B cell (primary cell): ENCODE measurements at regions of chr1 and their contacts with region 1.

Region 1: DNA sequence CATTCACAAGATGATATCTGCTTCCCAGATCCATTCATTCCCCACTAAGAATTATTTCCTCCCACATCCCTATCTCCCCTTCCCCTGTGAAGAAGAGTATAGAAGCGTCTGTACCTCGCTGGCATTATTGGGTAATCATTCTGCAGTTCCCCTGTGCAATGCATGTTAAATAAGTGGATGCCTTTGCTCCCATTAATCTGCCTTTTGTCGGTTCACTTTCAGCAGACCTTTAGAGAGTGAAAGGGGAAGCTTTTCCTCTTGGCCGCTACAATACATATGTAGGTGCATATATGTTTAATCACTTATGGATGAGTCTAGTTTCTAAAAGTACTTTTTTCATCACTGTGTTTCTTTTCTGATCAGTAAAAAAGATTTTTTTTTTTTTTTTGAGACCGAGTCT is 7.0 kb downstream of the CLCN6 start:
- DNase-seq: no peak
- ATAC-seq: no peak
- H3K4me3 ChIP-seq: no peak overlapping the region
- H3K4me3 Mint-ChIP-seq: peak overlapping the region; percentile 23
- H3K27ac ChIP-seq: peak overlapping the region in 1 of 2 donors; percentile 91
- H3K27ac Mint-ChIP-seq: peak overlapping the region; percentile 86
- H3K4me1 ChIP-seq: peaks cover 42 to 54% of the 10 kb centered on the region in 2 donors
- H3K4me1 Mint-ChIP-seq: peaks cover 61% of the 10 kb centered on the region
- H3K27me3 ChIP-seq: no peaks in the 10 kb centered on the region
- H3K27me3 Mint-ChIP-seq: no peaks in the 10 kb centered on the region
- CTCF ChIP-seq: no peak

Region 2: DNA sequence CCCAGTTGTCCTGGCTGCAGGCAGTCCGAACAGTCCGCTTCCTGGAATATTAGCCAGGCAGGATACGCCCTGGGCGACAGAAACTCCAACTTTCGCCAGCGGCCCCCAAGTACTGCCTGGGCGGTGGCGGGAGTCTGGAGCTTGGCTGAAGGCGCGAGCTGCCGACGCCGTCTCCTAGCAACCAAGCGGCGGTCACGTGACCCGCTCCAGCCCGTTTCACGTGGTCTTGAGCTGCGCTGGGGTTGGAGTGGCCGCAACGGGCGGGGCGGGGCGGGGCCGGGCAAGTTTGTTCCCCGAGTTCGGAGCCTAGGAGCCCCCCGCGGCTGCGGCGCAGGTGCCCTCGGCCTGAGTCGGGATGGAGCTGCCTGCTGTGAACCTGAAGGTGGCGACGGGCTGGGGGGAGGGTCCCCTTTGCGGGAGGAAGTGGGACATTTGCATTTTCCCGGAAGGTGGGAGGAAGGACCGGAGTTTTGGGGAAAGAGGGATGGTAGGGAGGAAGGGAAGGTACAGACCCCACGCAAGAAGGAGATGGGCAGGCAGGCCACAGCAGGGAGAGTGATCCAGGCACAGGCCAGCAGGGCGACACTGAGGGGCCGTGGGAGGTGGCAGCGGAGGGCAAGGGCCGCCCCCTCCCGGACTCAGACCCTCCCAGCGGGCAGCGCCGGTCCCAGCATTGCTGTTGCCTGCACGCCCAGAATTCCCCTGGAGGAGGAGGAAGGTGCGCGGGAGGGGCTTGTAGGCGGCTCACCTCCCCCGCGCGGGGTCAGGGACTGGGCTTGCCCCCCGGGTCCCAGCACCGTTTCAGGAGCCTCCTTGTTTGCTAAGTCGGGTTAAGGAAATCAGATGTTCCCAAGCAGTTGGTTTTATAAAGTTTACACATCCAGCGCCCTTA is 76.9 kb before region 1 on chr1 and contains the start of gene AGTRAP:
- CTCF ChIA-PET with region 1: no interaction called
- POLR2A ChIA-PET with region 1: no interaction called
- intact Hi-C with region 1: loop called (anchors 2 kb)
- DNase-seq: peak; percentile 94
- ATAC-seq: peak; percentile 90
- H3K4me3 ChIP-seq: peak within 1 kb of the TSS; percentile 67 to 99 (median 98)
- H3K4me3 Mint-ChIP-seq: peak within 1 kb of the TSS; percentile 97
- H3K27ac ChIP-seq: peak within 1 kb of the TSS; percentile 14 to 83
- H3K27ac Mint-ChIP-seq: peak within 1 kb of the TSS; percentile 93
- H3K4me1 ChIP-seq: peaks cover 33 to 42% of the 10 kb centered on the region in 2 donors
- H3K4me1 Mint-ChIP-seq: peaks cover 42% of the 10 kb centered on the region
- H3K27me3 ChIP-seq: no peaks in the 10 kb centered on the region
- H3K27me3 Mint-ChIP-seq: no peaks in the 10 kb centered on the region
- CTCF ChIP-seq: no peak
- total RNA-seq, gene AGTRAP: 18.3 and 20.2 TPM in 2 replicates

Region 3: GRCh38 chr1:11784993-11785769 is 27.8 kb before region 1 on chr1:
- CTCF ChIA-PET with region 1: interaction called, 3 read pairs
- POLR2A ChIA-PET with region 1: no interaction called
- intact Hi-C with region 1: loop called (anchors 2 kb)
- DNase-seq: peak; percentile 74
- ATAC-seq: peak; percentile 82
- H3K4me3 ChIP-seq: peak overlapping the region in 4 of 5 experiments; percentile 23 to 50 (median 36)
- H3K4me3 Mint-ChIP-seq: peak overlapping the region; percentile 68
- H3K27ac ChIP-seq: peak overlapping the region in 1 of 2 donors; percentile 26
- H3K27ac Mint-ChIP-seq: peak overlapping the region; percentile 72
- H3K4me1 ChIP-seq: peaks cover 19 to 23% of the 10 kb centered on the region in 2 donors
- H3K4me1 Mint-ChIP-seq: peaks cover 26% of the 10 kb centered on the region
- H3K27me3 ChIP-seq: no peaks in the 10 kb centered on the region
- H3K27me3 Mint-ChIP-seq: no peaks in the 10 kb centered on the region
- CTCF ChIP-seq: peak; percentile 85

Region 4: DNA sequence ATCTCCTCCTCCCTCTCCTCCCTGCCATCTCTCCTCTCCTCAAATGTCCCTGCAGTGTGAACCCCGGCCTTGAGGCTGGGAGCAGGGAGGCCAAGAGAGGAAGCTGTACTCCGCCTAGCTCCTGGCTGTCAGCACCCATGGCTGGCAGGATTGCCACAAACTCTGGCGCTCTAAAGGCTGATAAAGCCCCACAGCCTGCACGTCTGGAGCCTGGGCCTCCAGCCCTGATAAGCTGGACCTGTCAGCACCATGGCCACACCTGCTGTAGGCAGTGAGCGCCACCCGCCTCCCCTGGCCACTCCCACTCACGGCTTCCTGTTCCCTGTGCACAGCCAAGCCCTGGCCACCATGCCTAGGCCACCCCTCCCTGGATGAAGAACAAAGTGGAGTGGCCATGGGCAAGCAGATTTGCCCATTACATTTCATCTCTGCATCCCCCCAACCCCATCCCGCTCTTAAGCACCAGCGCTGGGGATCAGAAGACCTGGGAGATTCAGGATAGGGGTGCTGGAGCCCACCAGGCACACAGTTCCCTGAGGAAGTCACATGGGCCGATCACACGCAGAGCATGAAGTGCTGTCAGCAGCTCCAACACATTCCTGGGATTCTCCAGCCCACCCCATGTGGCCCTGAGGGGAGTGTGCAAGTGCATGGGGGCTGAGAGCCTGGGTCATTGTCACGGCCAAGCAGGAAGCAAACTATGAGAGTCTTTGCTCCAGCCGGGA is 70.0 kb after region 1 on chr1:
- CTCF ChIA-PET with region 1: no interaction called
- POLR2A ChIA-PET with region 1: no interaction called
- intact Hi-C with region 1: no loop called
- DNase-seq: no peak
- ATAC-seq: no peak
- H3K4me3 ChIP-seq: no peak overlapping the region
- H3K4me3 Mint-ChIP-seq: no peak overlapping the region
- H3K27ac ChIP-seq: no peak overlapping the region
- H3K27ac Mint-ChIP-seq: no peak overlapping the region
- H3K4me1 ChIP-seq: no peaks in the 10 kb centered on the region
- H3K4me1 Mint-ChIP-seq: no peaks in the 10 kb centered on the region
- H3K27me3 ChIP-seq: peaks cover 0 to 8% (median 0%) of the 10 kb centered on the region in 4 experiments
- H3K27me3 Mint-ChIP-seq: peaks cover 7% of the 10 kb centered on the region
- CTCF ChIP-seq: no peak